MCF 10A (cell line): ENCODE measurements at regions of chr9 and their contacts with region 1.

Region 1: DNA sequence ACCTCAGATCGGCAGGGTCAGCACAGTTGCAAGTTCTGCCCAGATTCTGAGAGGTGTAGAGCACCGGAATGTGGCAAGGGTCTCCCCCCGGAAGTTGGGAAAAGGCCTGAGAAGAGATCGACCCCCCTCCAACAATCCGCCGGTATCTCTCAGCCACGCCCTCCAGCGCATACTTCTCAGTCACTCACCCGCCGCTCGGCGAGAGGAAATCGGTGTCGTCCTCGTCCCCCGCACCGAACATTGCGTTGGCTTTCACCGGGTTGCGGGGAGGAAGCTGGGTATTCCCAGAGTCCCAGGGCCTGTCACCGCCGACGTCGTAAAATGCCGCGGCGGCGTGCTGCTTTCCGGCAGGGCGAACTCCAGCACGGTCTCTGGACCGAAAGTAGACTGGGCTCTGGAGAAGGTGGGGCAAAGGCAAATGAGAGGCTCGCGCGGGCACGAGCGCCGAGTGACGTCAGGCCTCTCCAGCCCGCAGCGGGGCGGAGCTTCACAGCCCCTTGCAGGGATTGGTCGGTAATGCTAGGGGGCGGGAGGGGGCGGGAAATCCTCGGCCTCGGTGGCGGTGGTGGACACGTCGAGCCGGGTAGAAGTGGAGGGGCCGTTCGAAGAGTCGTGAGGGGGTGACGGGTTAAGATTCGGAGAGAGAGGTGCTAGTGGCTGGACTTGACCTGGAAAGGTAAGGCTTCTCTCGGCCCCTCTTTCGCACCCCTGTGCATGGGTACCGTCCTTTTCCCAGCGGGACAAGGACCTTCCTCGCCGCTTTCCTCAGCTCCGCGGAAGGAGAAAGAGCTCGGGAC is at the starts of genes FKBP15 and SLC31A1:
- DNase-seq: peak; percentile 98
- H3K4me3 Mint-ChIP-seq: peak within 1 kb of the TSS; percentile 97
- H3K27ac Mint-ChIP-seq: peak within 1 kb of the TSS; percentile 96
- H3K4me1 Mint-ChIP-seq: peaks cover 19% of the 10 kb centered on the region
- H3K27me3 Mint-ChIP-seq: no peaks in the 10 kb centered on the region
- CTCF ChIP-seq: no peak
- total RNA-seq, gene FKBP15: 32.2 and 32.6 TPM in 2 replicates
- total RNA-seq, gene SLC31A1: 56.3 and 69.4 TPM in 2 replicates

Region 2: GRCh38 chr9:113150670-113151611 is 70.3 kb before region 1 on chr9 and contains the start of gene SLC31A2:
- CTCF ChIA-PET with region 1: interaction called, 4 read pairs
- POLR2A ChIA-PET with region 1: interaction called, 50 read pairs
- intact Hi-C with region 1: loop called (anchors 1 kb)
- DNase-seq: peak; percentile 83
- H3K4me3 Mint-ChIP-seq: peak within 1 kb of the TSS; percentile 65
- H3K27ac Mint-ChIP-seq: peak within 1 kb of the TSS; percentile 50
- H3K4me1 Mint-ChIP-seq: peaks cover 27% of the 10 kb centered on the region
- H3K27me3 Mint-ChIP-seq: peaks cover 10% of the 10 kb centered on the region
- CTCF ChIP-seq: peak; percentile 22
- total RNA-seq, gene SLC31A2: 14.9 and 16.1 TPM in 2 replicates

Region 3: GRCh38 chr9:113187935-113188595 is 33.1 kb before region 1 on chr9:
- CTCF ChIA-PET with region 1: interaction called, 4 read pairs
- POLR2A ChIA-PET with region 1: interaction called, 80 read pairs
- intact Hi-C with region 1: loop called (anchors 5 kb)
- DNase-seq: peak; percentile 92
- H3K4me3 Mint-ChIP-seq: peak overlapping the region; percentile 60
- H3K27ac Mint-ChIP-seq: peak overlapping the region; percentile 96
- H3K4me1 Mint-ChIP-seq: peaks cover 45% of the 10 kb centered on the region
- H3K27me3 Mint-ChIP-seq: no peaks in the 10 kb centered on the region
- CTCF ChIP-seq: no peak

Region 4: DNA sequence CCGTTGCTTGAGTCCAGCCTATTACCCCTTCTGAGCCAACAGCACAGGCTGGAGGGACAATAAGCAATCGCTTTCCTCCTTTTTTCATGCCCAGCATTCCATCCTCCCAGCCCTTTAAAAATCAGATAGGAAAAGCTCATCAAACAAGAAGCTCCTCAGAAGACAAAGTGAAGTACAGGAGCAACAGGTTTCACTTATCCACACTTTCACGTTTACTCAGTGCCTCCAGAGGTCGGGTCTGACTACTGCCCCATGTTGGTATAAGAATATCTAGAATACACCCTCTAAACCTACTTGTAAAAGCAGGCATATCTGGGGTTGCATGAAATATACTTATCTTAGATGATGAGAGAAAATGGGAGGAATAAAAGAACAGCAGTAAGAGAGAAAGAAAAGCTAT is 24.2 kb before region 1 on chr9:
- CTCF ChIA-PET with region 1: interaction called, 3 read pairs
- POLR2A ChIA-PET with region 1: interaction called, 20 read pairs
- intact Hi-C with region 1: no loop called
- DNase-seq: no peak
- H3K4me3 Mint-ChIP-seq: no peak overlapping the region
- H3K27ac Mint-ChIP-seq: no peak overlapping the region
- H3K4me1 Mint-ChIP-seq: no peaks in the 10 kb centered on the region
- H3K27me3 Mint-ChIP-seq: no peaks in the 10 kb centered on the region
- CTCF ChIP-seq: no peak

Region 5: GRCh38 chr9:113205432-113205831 is 15.8 kb before region 1 on chr9:
- CTCF ChIA-PET with region 1: interaction called, 3 read pairs
- POLR2A ChIA-PET with region 1: interaction called, 17 read pairs
- intact Hi-C with region 1: no loop called
- DNase-seq: no peak
- H3K4me3 Mint-ChIP-seq: no peak overlapping the region
- H3K27ac Mint-ChIP-seq: no peak overlapping the region
- H3K4me1 Mint-ChIP-seq: no peaks in the 10 kb centered on the region
- H3K27me3 Mint-ChIP-seq: no peaks in the 10 kb centered on the region
- CTCF ChIP-seq: no peak

Region 6: GRCh38 chr9:113238859-113239232 is 17.6 kb after region 1 on chr9:
- CTCF ChIA-PET with region 1: interaction called, 3 read pairs
- POLR2A ChIA-PET with region 1: interaction called, 22 read pairs
- intact Hi-C with region 1: no loop called
- DNase-seq: no peak
- H3K4me3 Mint-ChIP-seq: no peak overlapping the region
- H3K27ac Mint-ChIP-seq: no peak overlapping the region
- H3K4me1 Mint-ChIP-seq: peaks cover 6% of the 10 kb centered on the region
- H3K27me3 Mint-ChIP-seq: no peaks in the 10 kb centered on the region
- CTCF ChIP-seq: no peak